Activated CD4-positive, alpha-beta memory T cell treated with anti-CD3 and anti-CD28 coated beads for 36 hours (primary cell): ENCODE measurements at regions of chr2 and their contacts with region 1.

Region 1: GRCh38 chr2:171416009-171416926 is 17.5 kb downstream of the METTL8 start:
- DNase-seq: peak; percentile 91
- H3K4me3 Mint-ChIP-seq: no peak overlapping the region
- H3K27ac Mint-ChIP-seq: peak overlapping the region; percentile 88
- H3K4me1 Mint-ChIP-seq: peaks cover 33% of the 10 kb centered on the region
- H3K27me3 Mint-ChIP-seq: no peaks in the 10 kb centered on the region

Region 2: GRCh38 chr2:170973492-170974303 is 442.6 kb before region 1 on chr2:
- CTCF ChIA-PET with region 1: interaction called, 65 read pairs
- POLR2A ChIA-PET with region 1: no interaction called
- intact Hi-C with region 1: loop called (anchors 1 kb)
- DNase-seq: peak; percentile 91
- H3K4me3 Mint-ChIP-seq: peak overlapping the region; percentile 72
- H3K27ac Mint-ChIP-seq: peak overlapping the region; percentile 42
- H3K4me1 Mint-ChIP-seq: peaks cover 14% of the 10 kb centered on the region
- H3K27me3 Mint-ChIP-seq: no peaks in the 10 kb centered on the region

Region 3: DNA sequence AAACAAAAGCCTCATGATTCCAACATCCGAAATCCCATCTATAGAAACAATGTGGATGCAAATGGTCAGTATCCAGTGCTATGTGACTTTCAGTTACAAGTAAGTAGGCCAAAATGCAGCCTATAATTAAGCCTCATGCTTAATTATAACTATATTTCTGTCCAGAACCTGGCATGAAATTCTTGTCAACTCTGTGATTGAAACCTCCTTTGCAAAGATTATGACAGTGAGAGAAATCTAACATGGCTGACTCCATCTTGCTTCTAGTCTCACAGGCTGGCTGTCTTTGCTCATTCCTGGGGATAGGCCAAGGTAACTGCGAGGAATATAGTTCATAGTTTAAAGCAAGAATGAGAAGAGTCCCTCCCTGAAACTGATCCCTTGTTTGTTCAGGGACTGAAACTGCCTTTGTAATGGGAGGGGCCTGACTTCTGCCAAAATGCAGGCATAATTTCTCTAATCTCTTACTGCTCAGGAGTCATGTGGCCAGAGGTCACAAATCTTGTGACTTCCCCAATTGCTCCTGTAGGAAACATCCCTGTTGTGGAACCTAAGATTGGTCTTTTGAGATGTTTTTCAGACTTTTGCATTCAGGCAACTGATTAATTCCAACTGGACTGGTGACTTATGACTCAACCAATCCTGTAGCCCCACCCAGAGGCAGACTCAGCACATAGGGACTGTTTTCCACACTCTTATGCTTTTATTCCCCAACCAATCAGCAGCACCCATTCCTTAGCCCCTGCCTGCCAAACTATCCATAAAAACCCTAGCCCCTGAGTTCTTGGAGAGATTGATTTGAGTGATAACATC is 171.1 kb before region 1 on chr2:
- CTCF ChIA-PET with region 1: interaction called, 5 read pairs
- POLR2A ChIA-PET with region 1: no interaction called
- intact Hi-C with region 1: loop called (anchors 5 kb)
- DNase-seq: peak; percentile 13
- H3K4me3 Mint-ChIP-seq: no peak overlapping the region
- H3K27ac Mint-ChIP-seq: no peak overlapping the region
- H3K4me1 Mint-ChIP-seq: peaks cover 50% of the 10 kb centered on the region
- H3K27me3 Mint-ChIP-seq: no peaks in the 10 kb centered on the region

Region 4: DNA sequence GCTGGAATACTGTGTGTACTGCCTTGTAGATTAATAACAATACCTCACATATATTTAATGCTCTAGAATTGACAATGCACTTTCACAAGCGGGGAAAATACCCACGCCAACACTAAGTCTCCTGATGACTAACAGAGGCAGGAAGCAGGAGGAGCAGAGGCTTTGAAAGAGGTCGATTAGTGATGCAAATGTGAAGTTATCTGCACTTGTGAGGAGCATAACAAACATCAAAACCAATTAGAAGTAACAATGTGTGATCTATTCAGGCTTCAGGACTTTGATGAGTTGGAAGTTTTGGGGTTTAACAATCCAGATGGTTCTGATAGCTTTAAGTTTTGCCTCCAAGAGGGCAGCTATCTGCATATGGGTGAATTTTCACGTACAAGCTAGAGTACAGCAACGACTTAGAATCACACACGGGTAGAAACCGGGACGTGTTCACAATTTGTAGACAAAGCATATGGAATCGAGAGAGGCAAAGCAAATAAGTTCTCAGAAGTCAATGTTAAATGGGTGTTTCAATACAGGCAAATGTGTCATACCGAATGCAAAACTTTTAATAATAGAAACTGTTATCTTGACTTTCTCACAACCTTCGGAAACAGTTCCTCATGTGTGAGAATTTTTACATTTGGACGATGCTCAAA is 97.0 kb before region 1 on chr2:
- CTCF ChIA-PET with region 1: interaction called, 6 read pairs
- POLR2A ChIA-PET with region 1: interaction called, 15 read pairs
- intact Hi-C with region 1: loop called (anchors 1 kb)
- DNase-seq: peak; percentile 78
- H3K4me3 Mint-ChIP-seq: peak overlapping the region; percentile 69
- H3K27ac Mint-ChIP-seq: peak overlapping the region; percentile 99
- H3K4me1 Mint-ChIP-seq: peaks cover 61% of the 10 kb centered on the region
- H3K27me3 Mint-ChIP-seq: no peaks in the 10 kb centered on the region

Region 5: DNA sequence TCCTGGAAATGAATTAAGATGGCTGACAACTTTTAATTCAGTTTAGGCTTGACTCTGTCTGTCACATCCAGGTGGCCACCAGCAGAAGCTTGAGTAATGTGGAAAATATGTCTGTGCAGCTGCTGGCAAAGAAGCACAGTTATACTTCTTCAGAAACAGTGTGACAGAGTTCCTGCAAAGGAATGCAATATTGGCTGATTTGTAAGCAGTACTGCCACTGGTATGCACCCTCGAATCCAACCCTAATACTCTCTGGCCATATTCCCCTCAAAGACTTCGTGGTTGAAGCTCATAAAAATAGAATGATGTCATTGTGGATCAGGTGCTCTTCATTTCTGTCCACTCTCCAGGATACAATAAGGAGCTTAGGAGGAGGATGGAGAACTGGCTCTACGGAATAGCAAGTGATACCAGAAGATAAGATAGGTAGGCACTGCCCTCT is 68.7 kb before region 1 on chr2:
- CTCF ChIA-PET with region 1: interaction called, 5 read pairs
- POLR2A ChIA-PET with region 1: no interaction called
- intact Hi-C with region 1: loop called (anchors 2 kb)
- DNase-seq: peak; percentile 39
- H3K4me3 Mint-ChIP-seq: no peak overlapping the region
- H3K27ac Mint-ChIP-seq: peak overlapping the region; percentile 65
- H3K4me1 Mint-ChIP-seq: peaks cover 31% of the 10 kb centered on the region
- H3K27me3 Mint-ChIP-seq: no peaks in the 10 kb centered on the region

Region 6: GRCh38 chr2:171365232-171365631 is 51.0 kb before region 1 on chr2:
- CTCF ChIA-PET with region 1: no interaction called
- POLR2A ChIA-PET with region 1: no interaction called
- intact Hi-C with region 1: no loop called
- DNase-seq: no peak
- H3K4me3 Mint-ChIP-seq: no peak overlapping the region
- H3K27ac Mint-ChIP-seq: no peak overlapping the region
- H3K4me1 Mint-ChIP-seq: no peaks in the 10 kb centered on the region
- H3K27me3 Mint-ChIP-seq: no peaks in the 10 kb centered on the region

Region 7: GRCh38 chr2:171389325-171389724 is 26.9 kb before region 1 on chr2:
- CTCF ChIA-PET with region 1: no interaction called
- POLR2A ChIA-PET with region 1: no interaction called
- intact Hi-C with region 1: no loop called
- DNase-seq: no peak
- H3K4me3 Mint-ChIP-seq: no peak overlapping the region
- H3K27ac Mint-ChIP-seq: no peak overlapping the region
- H3K4me1 Mint-ChIP-seq: peaks cover 24% of the 10 kb centered on the region
- H3K27me3 Mint-ChIP-seq: no peaks in the 10 kb centered on the region

Region 8: GRCh38 chr2:171433763-171434670 is 17.7 kb after region 1 on chr2 and contains the starts of genes DCAF17 and METTL8:
- CTCF ChIA-PET with region 1: interaction called, 11 read pairs
- POLR2A ChIA-PET with region 1: interaction called, 3 read pairs
- intact Hi-C with region 1: loop called (anchors 1 kb)
- DNase-seq: peak; percentile 96
- H3K4me3 Mint-ChIP-seq: peak within 1 kb of the TSS; percentile 92
- H3K27ac Mint-ChIP-seq: peak within 1 kb of the TSS; percentile 92
- H3K4me1 Mint-ChIP-seq: peaks cover 57% of the 10 kb centered on the region
- H3K27me3 Mint-ChIP-seq: no peaks in the 10 kb centered on the region
- total RNA-seq, gene DCAF17: 14.1 to 14.7 TPM
- total RNA-seq, gene METTL8: 33.3 to 40.9 TPM